Activated T-helper 2 cell treated with anti-CD3 and anti-CD28 coated beads, Interferon-gamma antibody, Interleukin-2, Interleukin-4, amounts not matched to agents 10 μg/mL and 5 μg/mL and 100 μg/mL, durations not matched to agents 14 hours and 24 hours and 36 hours (primary cell): ENCODE measurements at regions of chr22 and their contacts with region 1.

Region 1: DNA sequence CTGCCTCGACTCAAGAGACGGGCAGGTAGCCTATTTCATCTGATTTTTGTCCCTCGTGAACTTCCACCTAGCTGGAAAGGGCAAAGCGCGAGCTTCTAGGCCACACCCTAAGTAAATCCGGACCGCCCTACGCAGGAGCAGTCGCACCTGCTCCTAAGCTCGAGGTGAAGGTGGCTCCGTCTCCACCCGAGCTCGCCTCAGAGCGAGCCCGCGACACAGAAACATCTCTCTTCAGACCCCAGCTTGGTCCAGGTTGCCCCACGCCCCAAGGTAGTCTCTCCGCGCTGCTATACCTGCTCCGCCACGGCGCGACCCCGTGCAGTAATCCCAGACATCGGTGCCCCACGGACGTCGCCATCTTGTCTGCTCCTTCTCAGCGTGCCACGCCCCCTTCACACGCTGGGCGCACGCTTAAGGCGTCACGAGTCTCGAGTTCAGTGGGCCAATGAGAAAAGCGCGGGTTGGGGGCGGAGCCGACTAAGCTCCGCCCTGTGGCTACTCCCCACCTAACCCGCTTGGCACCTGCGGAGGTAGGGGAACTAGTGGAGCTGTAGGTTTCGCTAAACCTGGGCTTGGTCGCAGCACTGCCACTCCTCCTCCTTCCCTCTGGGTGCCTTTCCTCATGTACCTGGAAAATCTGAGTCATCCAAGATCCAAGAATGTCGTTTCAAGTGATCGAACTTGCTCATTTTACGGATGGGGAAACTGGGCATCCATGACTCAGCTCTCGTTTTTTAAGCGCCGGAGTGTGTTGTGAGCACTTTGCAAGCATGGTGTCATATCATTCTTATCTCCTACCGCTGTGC is at the start of gene PISD:
- DNase-seq: peak; percentile 95
- H3K4me3 Mint-ChIP-seq: peak within 1 kb of the TSS; percentile 95
- H3K27ac Mint-ChIP-seq: peak within 1 kb of the TSS; percentile 94
- H3K4me1 Mint-ChIP-seq: peaks cover 21% of the 10 kb centered on the region
- H3K27me3 Mint-ChIP-seq: no peaks in the 10 kb centered on the region
- total RNA-seq, gene PISD: 44.3 and 44.9 TPM in 2 replicates

Region 2: DNA sequence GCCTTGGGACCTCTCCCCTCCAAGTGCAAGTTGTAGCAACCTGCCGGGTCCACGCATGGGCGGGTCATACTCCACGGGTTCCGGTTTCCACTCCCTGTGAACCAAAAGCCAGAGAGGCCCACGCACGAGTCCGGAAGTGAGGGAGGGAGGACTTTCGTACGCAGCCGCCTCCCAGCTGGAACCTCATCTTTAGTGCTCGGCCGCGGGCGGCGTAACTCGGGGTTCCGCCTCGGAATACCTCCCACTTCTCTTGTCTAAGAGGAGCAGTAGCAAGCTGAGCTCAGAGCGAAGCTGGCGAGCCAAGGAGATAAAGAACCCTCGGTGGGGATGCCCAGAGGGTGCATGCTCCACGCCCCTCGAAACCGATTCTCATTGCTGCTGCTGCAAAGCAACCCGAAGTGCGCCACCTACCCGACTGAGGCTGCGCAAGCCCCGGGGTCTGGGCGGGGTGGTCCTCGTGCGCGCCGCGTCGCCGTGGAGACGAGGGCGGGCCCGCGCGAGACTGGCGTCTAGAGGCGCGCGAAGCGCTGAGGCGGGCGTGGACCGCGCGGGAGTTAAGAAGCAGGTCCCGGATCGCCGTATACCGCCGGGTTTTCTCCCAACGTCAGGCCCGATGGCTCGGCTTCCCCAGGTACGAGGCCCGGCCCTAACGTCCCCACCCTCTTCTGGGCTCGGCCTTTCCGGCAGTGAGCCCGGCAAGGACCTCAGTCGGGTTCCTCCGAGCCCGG is 165.9 kb before region 1 on chr22 and contains the start of gene SFI1:
- intact Hi-C with region 1: no loop called
- DNase-seq: peak; percentile 92
- H3K4me3 Mint-ChIP-seq: peak within 1 kb of the TSS; percentile 98
- H3K27ac Mint-ChIP-seq: peak within 1 kb of the TSS; percentile 96
- H3K4me1 Mint-ChIP-seq: peaks cover 29% of the 10 kb centered on the region
- H3K27me3 Mint-ChIP-seq: no peaks in the 10 kb centered on the region
- total RNA-seq, gene SFI1: 409 and 435 TPM in 2 replicates

Region 3: GRCh38 chr22:31588970-31589675 is 72.9 kb before region 1 on chr22:
- intact Hi-C with region 1: no loop called
- DNase-seq: no peak
- H3K4me3 Mint-ChIP-seq: no peak overlapping the region
- H3K27ac Mint-ChIP-seq: peak overlapping the region; percentile 14
- H3K4me1 Mint-ChIP-seq: peaks cover 33% of the 10 kb centered on the region
- H3K27me3 Mint-ChIP-seq: no peaks in the 10 kb centered on the region

Region 4: DNA sequence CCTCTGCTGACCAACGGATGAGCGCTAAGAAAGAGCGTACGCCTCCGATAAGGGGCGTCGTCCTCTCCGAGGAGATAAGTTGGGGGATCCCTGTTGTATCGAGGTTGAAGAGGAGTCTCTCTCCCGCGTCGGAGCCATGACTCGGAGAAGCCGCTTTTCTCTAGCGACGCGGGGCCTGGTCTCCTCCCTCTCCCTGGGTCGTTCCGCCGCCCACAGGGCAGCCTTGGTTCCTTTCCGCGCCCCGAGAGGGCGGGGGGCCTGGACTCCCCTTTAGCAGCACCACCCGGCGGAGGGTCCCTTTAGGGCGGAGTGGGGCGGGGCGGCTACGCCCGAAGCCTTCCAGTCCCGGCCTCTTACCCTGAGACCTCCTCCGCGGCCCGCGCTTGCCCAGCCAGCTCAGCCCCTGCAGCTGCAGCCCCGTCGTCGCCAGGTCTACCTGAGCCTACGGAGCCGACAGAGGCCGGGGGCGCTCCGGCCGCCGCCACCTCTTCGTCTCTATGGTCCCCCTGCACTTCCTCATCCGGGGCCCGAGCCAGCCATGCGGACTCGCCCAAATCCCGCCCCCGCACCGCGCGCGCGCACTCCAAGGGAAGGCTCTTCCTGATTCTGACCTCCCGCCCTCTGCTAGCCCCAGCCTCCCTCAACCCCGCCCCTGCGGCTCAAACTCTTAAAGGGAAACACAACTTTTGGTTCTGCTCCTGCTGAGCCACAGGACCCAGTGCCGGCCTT is 87.7 kb after region 1 on chr22 and contains the start of gene PRR14L:
- intact Hi-C with region 1: loop called (anchors 5 kb)
- DNase-seq: peak; percentile 98
- H3K4me3 Mint-ChIP-seq: peak within 1 kb of the TSS; percentile 94
- H3K27ac Mint-ChIP-seq: peak within 1 kb of the TSS; percentile 91
- H3K4me1 Mint-ChIP-seq: peaks cover 50% of the 10 kb centered on the region
- H3K27me3 Mint-ChIP-seq: no peaks in the 10 kb centered on the region
- total RNA-seq, gene PRR14L: 54.2 and 58.0 TPM in 2 replicates

Region 5: DNA sequence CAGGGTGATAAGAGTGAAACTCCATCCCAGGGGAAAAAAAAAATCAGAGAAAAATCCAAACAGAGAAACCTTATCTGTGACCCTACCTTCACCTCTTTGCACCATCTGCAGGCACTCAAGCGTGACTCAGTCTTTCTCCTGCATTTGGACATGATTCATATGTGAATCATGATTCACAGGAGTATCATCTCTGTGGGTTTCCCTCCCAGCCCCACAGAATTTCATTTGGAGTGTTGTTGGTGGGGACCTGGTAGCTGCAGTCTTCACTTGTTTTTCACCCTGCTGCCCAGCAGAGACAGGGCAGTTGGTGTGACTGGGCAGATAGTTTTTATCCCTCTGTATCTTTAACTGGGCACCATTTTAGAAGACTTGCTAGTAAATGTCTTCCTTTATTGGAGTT is 167.5 kb after region 1 on chr22:
- intact Hi-C with region 1: loop called (anchors 10 kb)
- DNase-seq: peak; percentile 16
- H3K4me3 Mint-ChIP-seq: no peak overlapping the region
- H3K27ac Mint-ChIP-seq: peak overlapping the region; percentile 86
- H3K4me1 Mint-ChIP-seq: peaks cover 32% of the 10 kb centered on the region
- H3K27me3 Mint-ChIP-seq: no peaks in the 10 kb centered on the region

Region 6: DNA sequence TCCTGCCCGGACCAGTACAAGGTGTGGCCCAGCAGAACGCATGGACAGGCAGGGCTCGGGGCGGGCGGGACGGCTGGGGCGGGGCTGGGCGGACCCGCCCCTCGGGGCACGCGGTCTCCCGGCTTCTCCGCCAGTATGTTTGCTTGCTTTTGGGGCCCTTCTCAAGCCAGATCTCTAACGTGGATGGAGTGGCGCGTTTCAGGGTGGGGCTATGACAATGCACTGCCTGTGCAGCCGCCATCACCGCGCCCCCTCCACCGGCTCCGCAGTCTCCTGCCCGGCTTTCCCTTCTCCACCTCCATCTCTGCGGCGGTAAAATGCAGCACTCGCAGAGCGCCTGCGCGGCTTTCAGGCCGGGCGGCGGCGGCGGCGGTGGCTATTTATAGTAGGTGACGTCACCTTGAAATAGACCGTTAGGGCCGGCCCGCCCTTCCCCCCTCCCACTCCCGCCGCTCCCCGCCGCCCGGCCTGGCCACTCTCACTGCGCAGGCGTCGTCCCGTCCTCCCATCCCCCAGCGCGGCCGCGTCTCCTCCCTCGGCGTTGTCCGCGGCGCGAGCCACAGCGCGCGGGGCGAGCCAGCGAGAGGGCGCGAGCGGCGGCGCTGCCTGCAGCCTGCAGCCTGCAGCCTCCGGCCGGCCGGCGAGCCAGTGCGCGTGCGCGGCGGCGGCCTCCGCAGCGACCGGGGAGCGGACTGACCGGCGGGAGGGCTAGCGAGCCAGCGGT is 282.1 kb after region 1 on chr22 and contains the start of gene YWHAH:
- intact Hi-C with region 1: loop called (anchors 1 kb)
- DNase-seq: peak; percentile 89
- H3K4me3 Mint-ChIP-seq: peak within 1 kb of the TSS; percentile 88
- H3K27ac Mint-ChIP-seq: peak within 1 kb of the TSS; percentile 91
- H3K4me1 Mint-ChIP-seq: peaks cover 19% of the 10 kb centered on the region
- H3K27me3 Mint-ChIP-seq: no peaks in the 10 kb centered on the region
- total RNA-seq, gene YWHAH: 150 TPM in 2 replicates

Region 7: GRCh38 chr22:31970490-31971444 is 308.7 kb after region 1 on chr22:
- intact Hi-C with region 1: loop called (anchors 1 kb)
- DNase-seq: peak; percentile 85
- H3K4me3 Mint-ChIP-seq: peak overlapping the region; percentile 67
- H3K27ac Mint-ChIP-seq: no peak overlapping the region
- H3K4me1 Mint-ChIP-seq: peaks cover 12% of the 10 kb centered on the region
- H3K27me3 Mint-ChIP-seq: peaks cover 2% of the 10 kb centered on the region

Region 8: GRCh38 chr22:32341122-32341740 is 679.2 kb after region 1 on chr22:
- intact Hi-C with region 1: no loop called
- DNase-seq: no peak
- H3K4me3 Mint-ChIP-seq: no peak overlapping the region
- H3K27ac Mint-ChIP-seq: no peak overlapping the region
- H3K4me1 Mint-ChIP-seq: peaks cover 12% of the 10 kb centered on the region
- H3K27me3 Mint-ChIP-seq: peaks cover 31% of the 10 kb centered on the region